ENCODE measurements at regions of chr3 and their contacts with region 1.

Region 1: GRCh38 chr3:197749601-197750395 is at the start of gene FYTTD1:
- DNase-seq: peak; percentile 79 to 93 (median 88)
- ATAC-seq: peak; percentile 89
- H3K4me3 ChIP-seq: peak within 1 kb of the TSS; percentile 85
- H3K4me3 Mint-ChIP-seq: peak within 1 kb of the TSS; percentile 95 to 100 (median 98)
- H3K27ac ChIP-seq: peak within 1 kb of the TSS; percentile 94
- H3K27ac Mint-ChIP-seq: peak within 1 kb of the TSS; percentile 95 to 100 (median 99)
- H3K4me1 ChIP-seq: peaks cover 11 to 32% of the 10 kb centered on the region in 2 donors
- H3K4me1 Mint-ChIP-seq: peaks cover 27 to 61% (median 52%) of the 10 kb centered on the region in 7 donors
- H3K27me3 ChIP-seq: no peaks in the 10 kb centered on the region
- H3K27me3 Mint-ChIP-seq: no peaks in the 10 kb centered on the region
- total RNA-seq, gene FYTTD1: 45.6 to 63.4 (median 58.0) TPM

Region 2: DNA sequence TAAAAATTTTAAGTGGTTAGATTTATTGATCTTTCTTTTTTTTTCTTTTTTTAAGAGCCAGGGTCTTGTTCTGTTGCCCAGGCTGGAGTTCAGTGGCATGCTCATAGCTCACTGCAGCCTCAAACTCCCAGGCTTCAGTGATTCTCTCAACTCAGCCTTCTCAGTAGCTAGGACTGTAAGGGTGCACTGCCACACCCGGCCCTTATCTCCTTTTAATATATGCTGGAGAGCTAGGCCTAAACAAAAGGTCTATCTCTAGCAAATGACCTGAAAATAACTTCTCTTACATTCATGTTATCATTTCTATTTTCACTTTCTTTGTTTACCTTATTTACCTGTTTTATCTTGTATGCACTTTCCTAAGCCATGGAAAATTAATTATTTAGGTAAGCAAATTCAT is 685.0 kb before region 1 on chr3:
- CTCF ChIA-PET with region 1: no interaction called
- POLR2A ChIA-PET with region 1: no interaction called
- intact Hi-C with region 1: no loop called
- DNase-seq: no peak
- ATAC-seq: no peak
- H3K4me3 ChIP-seq: no peak overlapping the region
- H3K4me3 Mint-ChIP-seq: no peak overlapping the region
- H3K27ac ChIP-seq: no peak overlapping the region
- H3K27ac Mint-ChIP-seq: peak overlapping the region in 1 of 9 donors; percentile 8
- H3K4me1 ChIP-seq: no peaks in the 10 kb centered on the region
- H3K4me1 Mint-ChIP-seq: peaks cover 0 to 2% (median 0%) of the 10 kb centered on the region in 7 donors
- H3K27me3 ChIP-seq: no peaks in the 10 kb centered on the region
- H3K27me3 Mint-ChIP-seq: no peaks in the 10 kb centered on the region

Region 3: GRCh38 chr3:197736491-197737318 is 13.1 kb before region 1 on chr3 and contains the start of gene RUBCN:
- CTCF ChIA-PET with region 1: interaction called, 6 read pairs
- POLR2A ChIA-PET with region 1: interaction called, 12 read pairs
- intact Hi-C with region 1: loop called (anchors 1 kb)
- DNase-seq: peak; percentile 81 to 95 (median 93)
- ATAC-seq: peak; percentile 98
- H3K4me3 ChIP-seq: peak within 1 kb of the TSS; percentile 67
- H3K4me3 Mint-ChIP-seq: peak within 1 kb of the TSS; percentile 82 to 99 (median 96)
- H3K27ac ChIP-seq: peak within 1 kb of the TSS; percentile 83
- H3K27ac Mint-ChIP-seq: peak within 1 kb of the TSS; percentile 89 to 99 (median 97)
- H3K4me1 ChIP-seq: peaks cover 9 to 10% of the 10 kb centered on the region in 2 donors
- H3K4me1 Mint-ChIP-seq: peaks cover 29 to 52% (median 32%) of the 10 kb centered on the region in 7 donors
- H3K27me3 ChIP-seq: no peaks in the 10 kb centered on the region
- H3K27me3 Mint-ChIP-seq: no peaks in the 10 kb centered on the region
- total RNA-seq, gene RUBCN: 43.3 to 61.7 (median 52.9) TPM

Region 4: DNA sequence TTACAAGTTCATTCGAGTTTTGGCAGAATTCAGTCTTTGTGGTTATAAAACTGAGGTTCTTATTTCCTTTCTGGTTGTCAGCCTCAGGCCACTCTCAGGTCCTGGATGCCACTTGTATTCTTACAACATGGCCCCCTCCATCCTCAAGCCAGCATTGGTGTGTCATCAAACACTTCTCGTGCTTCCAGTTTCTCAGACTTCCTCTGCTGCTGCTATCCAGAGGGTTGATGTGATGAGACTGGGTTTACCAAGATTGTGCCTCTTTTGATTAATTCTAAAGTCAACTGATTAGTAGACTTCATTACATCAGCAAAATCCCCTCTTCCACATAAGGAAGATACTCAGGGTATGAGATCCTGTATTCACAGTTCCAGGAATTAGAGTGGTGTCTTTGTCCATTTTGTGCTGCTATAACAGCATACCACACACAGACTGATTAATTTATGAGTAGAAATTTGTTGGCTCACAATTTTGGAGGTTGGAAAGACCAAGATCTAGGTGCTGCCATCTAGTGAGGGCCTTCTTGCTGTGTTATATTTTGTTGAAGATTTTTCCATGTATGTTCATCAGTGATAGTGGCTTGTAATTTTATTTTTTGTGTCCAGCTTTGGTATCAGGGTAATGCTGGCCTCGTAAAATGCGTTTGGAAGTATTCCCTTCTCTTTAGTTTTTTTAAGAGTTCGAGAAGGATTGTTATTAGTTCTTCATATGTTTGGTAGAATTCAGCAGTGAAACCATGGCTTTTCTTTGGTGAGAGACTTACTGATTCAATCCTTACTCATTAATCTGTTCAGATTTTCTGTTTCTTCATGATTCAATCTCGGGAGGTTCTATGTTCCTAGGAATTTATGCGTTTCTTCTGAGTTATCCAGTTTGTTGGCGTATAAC is 52.3 kb after region 1 on chr3:
- CTCF ChIA-PET with region 1: interaction called, 6 read pairs
- POLR2A ChIA-PET with region 1: no interaction called
- intact Hi-C with region 1: loop called (anchors 1 to 2 kb)
- DNase-seq: peak in 5 of 9 donors; percentile 30 to 39 (median 34)
- ATAC-seq: peak; percentile 78
- H3K4me3 ChIP-seq: no peak overlapping the region
- H3K4me3 Mint-ChIP-seq: peak overlapping the region in 7 of 10 donors; percentile 12 to 35 (median 19)
- H3K27ac ChIP-seq: no peak overlapping the region
- H3K27ac Mint-ChIP-seq: peak overlapping the region; percentile 44 to 81 (median 57)
- H3K4me1 ChIP-seq: peaks cover 13 to 21% of the 10 kb centered on the region in 2 donors
- H3K4me1 Mint-ChIP-seq: peaks cover 35 to 59% (median 53%) of the 10 kb centered on the region in 7 donors
- H3K27me3 ChIP-seq: no peaks in the 10 kb centered on the region
- H3K27me3 Mint-ChIP-seq: no peaks in the 10 kb centered on the region

Region 5: GRCh38 chr3:197949754-197950660 is 200.2 kb after region 1 on chr3 and contains the start of gene RPL35A:
- CTCF ChIA-PET with region 1: no interaction called
- POLR2A ChIA-PET with region 1: no interaction called
- intact Hi-C with region 1: loop called in 1 of 2 experiments (anchors 1 kb)
- DNase-seq: peak; percentile 66 to 96 (median 92)
- ATAC-seq: peak; percentile 94
- H3K4me3 ChIP-seq: peak within 1 kb of the TSS; percentile 97
- H3K4me3 Mint-ChIP-seq: peak within 1 kb of the TSS; percentile 91 to 99 (median 96)
- H3K27ac ChIP-seq: peak within 1 kb of the TSS; percentile 93
- H3K27ac Mint-ChIP-seq: peak within 1 kb of the TSS; percentile 95 to 100 (median 100)
- H3K4me1 ChIP-seq: peaks cover 14 to 26% of the 10 kb centered on the region in 2 donors
- H3K4me1 Mint-ChIP-seq: peaks cover 27 to 52% (median 41%) of the 10 kb centered on the region in 7 donors
- H3K27me3 ChIP-seq: no peaks in the 10 kb centered on the region
- H3K27me3 Mint-ChIP-seq: peaks cover 0 to 2% (median 0%) of the 10 kb centered on the region in 5 donors
- total RNA-seq, gene RPL35A: 1,070 to 2,246 (median 1,860) TPM

Measured in naive thymus-derived CD4-positive, alpha-beta T cell (primary cell).